B cell (primary cell): ENCODE measurements at regions of chr2 and their contacts with region 1.

Region 1: DNA sequence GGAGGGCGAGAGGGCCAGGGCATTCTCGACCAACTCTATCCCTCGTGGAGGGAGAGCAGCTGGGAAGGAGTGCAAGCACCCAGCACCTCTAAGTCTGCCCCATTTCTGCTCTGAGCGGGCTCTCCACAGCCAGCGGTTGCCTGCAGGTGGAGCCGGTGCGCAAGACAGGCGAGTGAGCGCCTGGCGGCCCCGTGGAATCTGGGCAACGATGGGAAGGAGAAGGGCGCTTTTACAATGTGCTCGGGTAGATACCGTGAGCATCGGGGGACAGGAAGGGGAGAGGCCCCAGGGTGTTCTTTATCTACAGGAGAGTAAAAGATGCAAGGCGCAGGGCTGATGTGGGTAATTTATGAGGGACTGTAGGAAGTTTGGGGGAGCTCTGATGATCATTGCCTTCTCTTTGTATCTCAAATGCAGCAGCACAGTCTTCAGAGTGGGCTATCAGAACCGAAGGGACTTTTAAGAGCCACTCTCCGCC is 867 bp upstream of the TTL start:
- DNase-seq: peak; percentile 87
- ATAC-seq: peak; percentile 67
- H3K4me3 ChIP-seq: peak overlapping the region; percentile 84 to 96 (median 88)
- H3K4me3 Mint-ChIP-seq: peak overlapping the region; percentile 93
- H3K27ac ChIP-seq: peak overlapping the region; percentile 79 to 86
- H3K27ac Mint-ChIP-seq: peak overlapping the region; percentile 97
- H3K4me1 ChIP-seq: peaks cover 16 to 23% of the 10 kb centered on the region in 2 donors
- H3K4me1 Mint-ChIP-seq: peaks cover 18% of the 10 kb centered on the region
- H3K27me3 ChIP-seq: no peaks in the 10 kb centered on the region
- H3K27me3 Mint-ChIP-seq: no peaks in the 10 kb centered on the region
- CTCF ChIP-seq: peak; percentile 91

Region 2: GRCh38 chr2:111883661-111884591 is 597.2 kb before region 1 on chr2 and contains the start of gene ANAPC1:
- CTCF ChIA-PET with region 1: no interaction called
- POLR2A ChIA-PET with region 1: no interaction called
- intact Hi-C with region 1: loop called (anchors 5 kb)
- DNase-seq: peak; percentile 92
- ATAC-seq: peak; percentile 93
- H3K4me3 ChIP-seq: peak within 1 kb of the TSS; percentile 50 to 94 (median 92)
- H3K4me3 Mint-ChIP-seq: peak within 1 kb of the TSS; percentile 95
- H3K27ac ChIP-seq: peak within 1 kb of the TSS; percentile 84 to 93
- H3K27ac Mint-ChIP-seq: peak within 1 kb of the TSS; percentile 98
- H3K4me1 ChIP-seq: peaks cover 10 to 18% of the 10 kb centered on the region in 2 donors
- H3K4me1 Mint-ChIP-seq: peaks cover 12% of the 10 kb centered on the region
- H3K27me3 ChIP-seq: no peaks in the 10 kb centered on the region
- H3K27me3 Mint-ChIP-seq: no peaks in the 10 kb centered on the region
- CTCF ChIP-seq: no peak
- total RNA-seq, gene ANAPC1: 59.4 and 69.3 TPM in 2 replicates

Region 3: GRCh38 chr2:112254466-112255239 is 226.4 kb before region 1 on chr2 and contains the start of gene ZC3H8:
- CTCF ChIA-PET with region 1: interaction called, 9 read pairs
- POLR2A ChIA-PET with region 1: no interaction called
- intact Hi-C with region 1: loop called (anchors 2 kb)
- DNase-seq: peak; percentile 95
- ATAC-seq: peak; percentile 89
- H3K4me3 ChIP-seq: peak within 1 kb of the TSS; percentile 72 to 84 (median 79)
- H3K4me3 Mint-ChIP-seq: peak within 1 kb of the TSS; percentile 93
- H3K27ac ChIP-seq: peak within 1 kb of the TSS; percentile 83 to 93
- H3K27ac Mint-ChIP-seq: peak within 1 kb of the TSS; percentile 92
- H3K4me1 ChIP-seq: peaks cover 9 to 17% of the 10 kb centered on the region in 2 donors
- H3K4me1 Mint-ChIP-seq: peaks cover 23% of the 10 kb centered on the region
- H3K27me3 ChIP-seq: no peaks in the 10 kb centered on the region
- H3K27me3 Mint-ChIP-seq: no peaks in the 10 kb centered on the region
- CTCF ChIP-seq: no peak
- total RNA-seq, gene ZC3H8: 26.0 and 27.2 TPM in 2 replicates

Region 4: DNA sequence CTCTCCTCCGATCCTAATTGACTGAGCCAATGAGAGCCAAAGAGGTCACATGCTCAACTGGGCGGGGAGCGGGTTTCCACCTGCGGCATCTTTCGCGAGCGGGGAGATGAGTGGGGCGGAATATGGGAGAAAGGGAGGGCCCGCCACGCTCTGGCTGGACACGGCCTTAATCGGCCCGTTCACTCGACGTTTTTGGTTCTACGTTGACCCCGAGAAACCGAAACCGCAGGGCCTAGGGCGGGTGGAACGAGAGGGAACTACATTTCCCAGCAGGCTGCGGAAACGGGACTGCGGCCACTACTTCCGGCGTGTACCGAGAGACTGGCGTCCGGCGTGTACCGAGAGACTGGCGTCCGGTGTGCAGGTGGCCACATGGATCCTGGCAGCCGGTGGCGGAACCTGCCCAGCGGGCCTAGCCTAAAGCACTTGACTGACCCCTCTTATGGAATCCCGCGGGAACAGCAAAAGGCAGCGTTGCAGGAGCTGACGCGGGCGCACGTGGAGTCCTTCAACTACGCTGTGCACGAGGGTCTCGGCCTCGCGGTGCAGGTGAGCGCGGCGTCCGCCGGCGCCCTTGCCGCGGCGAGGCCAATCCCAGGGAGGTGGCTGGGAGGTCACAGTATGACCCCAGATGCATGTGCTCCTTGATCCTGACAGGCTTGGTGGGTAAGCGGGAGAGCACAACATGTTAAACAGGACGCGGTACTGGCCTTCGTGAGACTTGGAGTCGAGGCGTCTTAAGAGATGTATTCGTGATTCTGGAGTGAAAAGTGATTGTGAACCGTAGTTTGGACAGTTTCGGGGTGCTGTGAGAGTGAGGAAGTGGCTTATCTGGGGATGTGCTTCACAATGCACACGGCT is 61.3 kb after region 1 on chr2 and contains the start of gene POLR1B:
- CTCF ChIA-PET with region 1: interaction called, 8 read pairs
- POLR2A ChIA-PET with region 1: interaction called, 4 read pairs
- intact Hi-C with region 1: loop called (anchors 1 kb)
- DNase-seq: peak; percentile 88
- ATAC-seq: peak; percentile 80
- H3K4me3 ChIP-seq: peak within 1 kb of the TSS; percentile 65 to 99 (median 94)
- H3K4me3 Mint-ChIP-seq: no peak within 1 kb of the TSS
- H3K27ac ChIP-seq: peak within 1 kb of the TSS; percentile 85 to 94
- H3K27ac Mint-ChIP-seq: no peak within 1 kb of the TSS
- H3K4me1 ChIP-seq: peaks cover 15 to 18% of the 10 kb centered on the region in 2 donors
- H3K4me1 Mint-ChIP-seq: peaks cover 15% of the 10 kb centered on the region
- H3K27me3 ChIP-seq: no peaks in the 10 kb centered on the region
- H3K27me3 Mint-ChIP-seq: no peaks in the 10 kb centered on the region
- CTCF ChIP-seq: no peak
- total RNA-seq, gene POLR1B: 32.5 and 34.2 TPM in 2 replicates

Region 5: DNA sequence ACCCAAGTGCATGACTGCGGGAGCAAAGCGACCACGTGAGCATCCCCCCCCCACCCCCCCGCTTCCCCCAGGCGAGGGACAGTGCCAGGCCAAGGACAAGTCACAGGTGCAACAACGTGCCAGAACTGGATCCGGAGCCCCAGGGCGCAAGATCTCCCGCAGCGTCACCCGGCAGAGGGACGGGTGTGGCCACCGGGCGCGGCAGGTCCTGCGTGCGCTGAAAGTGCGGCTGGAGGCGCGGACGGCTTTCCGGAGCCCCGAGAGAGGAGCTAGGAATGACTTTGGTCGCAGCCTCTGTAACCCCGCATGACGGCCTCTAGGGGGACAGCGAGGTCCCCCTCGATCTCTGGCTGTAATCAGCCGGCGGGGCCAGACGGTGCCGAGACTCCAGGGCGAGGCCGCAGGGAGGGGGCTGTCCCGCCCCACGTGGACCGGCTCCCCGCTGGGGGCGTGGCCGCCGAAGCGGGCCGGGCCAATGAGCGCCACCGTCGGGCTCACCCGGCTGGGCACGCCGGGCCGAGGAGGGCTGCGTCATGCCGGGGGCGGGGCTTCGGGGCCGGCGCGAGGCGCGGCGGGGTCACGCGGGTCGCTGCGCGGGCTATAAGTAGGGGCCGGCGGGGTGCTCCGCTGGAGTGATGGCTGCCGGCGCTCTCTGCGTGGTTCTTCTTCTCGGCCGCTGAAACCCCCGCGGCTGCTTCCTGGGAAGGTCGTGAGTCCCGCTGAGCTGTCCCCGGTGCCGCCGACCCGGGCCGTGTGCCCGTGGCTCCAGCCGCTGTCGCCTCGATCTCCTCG is 164.4 kb after region 1 on chr2 and contains the start of gene SLC20A1:
- CTCF ChIA-PET with region 1: no interaction called
- POLR2A ChIA-PET with region 1: interaction called, 3 read pairs
- intact Hi-C with region 1: loop called (anchors 2 kb)
- DNase-seq: peak; percentile 98
- ATAC-seq: peak; percentile 93
- H3K4me3 ChIP-seq: peak within 1 kb of the TSS; percentile 65 to 98 (median 90)
- H3K4me3 Mint-ChIP-seq: peak within 1 kb of the TSS; percentile 94
- H3K27ac ChIP-seq: peak within 1 kb of the TSS; percentile 90 to 96
- H3K27ac Mint-ChIP-seq: peak within 1 kb of the TSS; percentile 90
- H3K4me1 ChIP-seq: peaks cover 15 to 20% of the 10 kb centered on the region in 2 donors
- H3K4me1 Mint-ChIP-seq: peaks cover 26% of the 10 kb centered on the region
- H3K27me3 ChIP-seq: no peaks in the 10 kb centered on the region
- H3K27me3 Mint-ChIP-seq: no peaks in the 10 kb centered on the region
- CTCF ChIP-seq: peak; percentile 69
- total RNA-seq, gene SLC20A1: 54.9 and 57.1 TPM in 2 replicates

Region 6: DNA sequence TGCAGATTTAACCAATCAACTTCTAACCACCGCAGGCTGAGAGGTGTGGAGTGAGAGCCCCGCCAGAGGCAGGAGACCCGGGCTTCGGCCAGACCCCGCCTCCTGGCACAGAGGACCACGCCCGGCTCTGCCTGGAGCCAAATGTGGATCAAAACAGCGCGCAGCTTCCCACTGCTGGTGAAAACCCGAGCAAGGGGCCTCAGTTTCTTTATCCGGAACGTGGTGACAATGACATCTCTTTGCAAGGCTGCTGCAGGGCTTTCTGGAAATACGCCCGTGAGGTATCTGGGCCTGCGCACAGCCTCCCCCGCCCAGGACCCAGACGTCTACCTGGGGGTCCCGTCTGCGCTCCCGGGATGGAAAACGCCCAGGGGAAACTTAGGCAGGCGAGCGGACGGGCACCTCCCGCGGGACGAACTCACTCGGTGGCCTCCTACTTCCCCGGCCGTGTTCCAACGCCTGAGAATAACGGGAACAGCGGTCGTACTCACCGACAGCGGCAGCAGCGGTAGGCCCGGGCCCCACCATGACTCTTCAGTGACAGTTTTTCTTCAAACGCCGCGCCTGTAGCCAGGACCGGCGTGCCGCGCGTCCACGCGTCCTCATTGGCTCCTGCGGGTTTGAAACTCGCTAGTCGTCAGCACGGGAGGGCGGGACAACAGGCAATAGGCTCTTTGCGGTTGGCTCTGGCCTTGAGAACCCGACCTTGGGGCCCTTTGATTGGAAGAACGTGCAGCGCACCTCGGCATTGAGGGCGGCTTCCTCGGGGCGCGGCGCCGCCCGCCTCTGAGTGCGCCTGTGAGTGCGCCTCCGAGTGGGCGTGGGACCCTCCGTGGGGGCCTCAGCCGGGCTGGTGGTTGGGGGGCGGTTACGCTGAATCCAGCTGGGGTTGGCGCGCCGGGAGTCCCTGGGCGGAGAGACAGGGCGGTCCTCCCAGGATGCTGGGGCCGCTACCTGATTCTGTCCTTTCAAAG is 283.3 kb after region 1 on chr2 and contains the start of gene CKAP2L:
- CTCF ChIA-PET with region 1: no interaction called
- POLR2A ChIA-PET with region 1: no interaction called
- intact Hi-C with region 1: loop called (anchors 10 kb)
- DNase-seq: peak; percentile 95
- ATAC-seq: peak; percentile 99
- H3K4me3 ChIP-seq: peak within 1 kb of the TSS; percentile 42 to 96 (median 71)
- H3K4me3 Mint-ChIP-seq: peak within 1 kb of the TSS; percentile 97
- H3K27ac ChIP-seq: peak within 1 kb of the TSS in 1 of 2 donors; percentile 58
- H3K27ac Mint-ChIP-seq: peak within 1 kb of the TSS; percentile 77
- H3K4me1 ChIP-seq: peaks cover 8 to 12% of the 10 kb centered on the region in 2 donors
- H3K4me1 Mint-ChIP-seq: peaks cover 32% of the 10 kb centered on the region
- H3K27me3 ChIP-seq: no peaks in the 10 kb centered on the region
- H3K27me3 Mint-ChIP-seq: no peaks in the 10 kb centered on the region
- CTCF ChIP-seq: no peak
- total RNA-seq, gene CKAP2L: 0.25 TPM in 1 of 2 replicates, not detected in the other